ENCODE measurements at regions of chr7 and their contacts with region 1.

Region 1: GRCh38 chr7:76262683-76263402 is 39.6 kb upstream of the HSPB1 start:
- DNase-seq: peak; percentile 82
- ATAC-seq: peak; percentile 50
- H3K4me3 Mint-ChIP-seq: no peak overlapping the region
- H3K27ac Mint-ChIP-seq: peak overlapping the region; percentile 79; the same call in 1 of the 2 replicates
- H3K4me1 Mint-ChIP-seq: peaks cover 32% of the 10 kb centered on the region
- H3K27me3 Mint-ChIP-seq: no peaks in the 10 kb centered on the region; the same call in 1 of the 2 replicates
- CTCF ChIP-seq: peak; percentile 77

Region 2: DNA sequence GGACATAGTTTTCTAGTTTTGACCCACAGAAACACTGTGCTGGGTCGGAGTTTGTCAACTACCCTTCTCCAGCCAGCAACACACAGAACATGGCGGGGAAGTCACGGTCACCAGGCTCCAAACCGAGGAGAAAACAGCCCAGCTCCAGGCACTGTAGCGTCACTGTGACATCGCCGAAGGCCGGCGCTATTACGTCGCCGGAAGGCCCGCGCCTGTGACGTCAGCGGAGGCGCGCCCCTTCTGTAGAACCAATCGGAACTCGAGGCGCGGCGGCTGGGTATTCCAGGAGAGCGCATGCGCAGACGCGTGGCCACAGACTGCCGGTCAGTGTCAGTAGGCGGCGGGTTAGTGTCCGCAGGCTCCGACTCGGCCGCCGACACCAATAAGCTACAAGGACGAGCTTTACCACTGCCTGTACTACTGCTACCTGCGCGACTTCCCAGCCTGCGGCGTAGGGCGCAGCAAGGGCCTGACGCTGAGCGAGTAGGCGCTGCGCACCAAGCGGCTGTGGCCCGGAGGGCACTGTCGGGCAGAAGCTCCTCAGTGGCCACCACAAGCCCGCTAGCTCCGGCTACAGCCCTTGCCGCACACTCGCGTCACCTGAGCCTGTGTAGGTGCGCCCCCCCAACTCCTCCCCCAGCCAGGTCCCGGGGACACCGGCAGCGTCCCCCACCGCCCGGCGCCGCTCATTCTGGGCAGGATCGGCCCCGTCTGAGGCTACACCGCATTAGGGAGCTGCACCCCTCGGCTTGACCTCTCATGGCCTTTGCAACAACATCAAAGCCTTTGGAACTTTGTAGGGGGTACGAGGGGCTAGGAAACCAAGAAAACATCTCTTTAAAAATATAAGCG is 96.2 kb before region 1 on chr7:
- CTCF ChIA-PET with region 1: interaction called, 22 read pairs
- POLR2A ChIA-PET with region 1: interaction called, 14 read pairs
- DNase-seq: peak; percentile 98
- ATAC-seq: peak; percentile 70
- H3K4me3 Mint-ChIP-seq: peak overlapping the region; percentile 70
- H3K27ac Mint-ChIP-seq: peak overlapping the region; percentile 99
- H3K4me1 Mint-ChIP-seq: peaks cover 35% of the 10 kb centered on the region
- H3K27me3 Mint-ChIP-seq: no peaks in the 10 kb centered on the region
- CTCF ChIP-seq: no peak

Region 3: DNA sequence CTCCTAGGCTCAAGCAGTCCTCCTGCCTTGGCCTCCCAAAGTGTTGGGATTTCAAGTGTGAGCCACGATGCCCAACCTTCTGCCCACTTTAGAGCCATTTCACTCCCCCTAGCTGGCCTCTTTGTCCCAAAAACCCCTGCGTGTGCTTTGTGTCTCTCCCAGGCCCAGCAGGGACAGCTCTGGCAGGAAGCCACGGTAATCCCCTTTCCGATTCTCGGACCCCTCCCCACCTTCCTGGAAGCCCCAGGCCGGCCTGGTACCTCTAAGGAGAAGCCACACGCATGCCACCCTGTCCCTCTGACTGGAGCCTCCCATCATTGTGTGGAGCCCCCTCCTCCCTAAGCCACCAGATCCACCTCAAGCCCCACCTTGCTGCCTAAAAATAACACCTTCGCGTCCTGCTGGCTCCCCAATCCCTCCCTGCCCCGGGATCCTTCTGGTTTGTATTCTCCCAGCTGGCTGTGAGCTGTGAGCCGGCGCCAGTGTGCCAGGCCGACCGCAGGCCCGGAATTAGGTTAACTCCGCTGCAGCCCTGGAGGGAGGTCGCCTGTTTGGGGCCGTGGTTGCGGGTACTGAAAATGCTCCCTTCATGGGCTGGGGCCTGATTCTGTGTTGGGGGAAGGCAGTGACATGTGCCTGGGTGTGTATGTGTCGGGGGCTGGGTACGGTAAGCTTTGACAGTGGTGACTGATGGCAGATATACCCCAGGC is 77.5 kb before region 1 on chr7:
- CTCF ChIA-PET with region 1: interaction called, 19 read pairs
- POLR2A ChIA-PET with region 1: no interaction called
- DNase-seq: no peak
- ATAC-seq: peak; percentile 74
- H3K4me3 Mint-ChIP-seq: no peak overlapping the region
- H3K27ac Mint-ChIP-seq: peak overlapping the region; percentile 68
- H3K4me1 Mint-ChIP-seq: peaks cover 10% of the 10 kb centered on the region
- H3K27me3 Mint-ChIP-seq: no peaks in the 10 kb centered on the region; the same call in 1 of the 2 replicates
- CTCF ChIP-seq: no peak

Region 4: DNA sequence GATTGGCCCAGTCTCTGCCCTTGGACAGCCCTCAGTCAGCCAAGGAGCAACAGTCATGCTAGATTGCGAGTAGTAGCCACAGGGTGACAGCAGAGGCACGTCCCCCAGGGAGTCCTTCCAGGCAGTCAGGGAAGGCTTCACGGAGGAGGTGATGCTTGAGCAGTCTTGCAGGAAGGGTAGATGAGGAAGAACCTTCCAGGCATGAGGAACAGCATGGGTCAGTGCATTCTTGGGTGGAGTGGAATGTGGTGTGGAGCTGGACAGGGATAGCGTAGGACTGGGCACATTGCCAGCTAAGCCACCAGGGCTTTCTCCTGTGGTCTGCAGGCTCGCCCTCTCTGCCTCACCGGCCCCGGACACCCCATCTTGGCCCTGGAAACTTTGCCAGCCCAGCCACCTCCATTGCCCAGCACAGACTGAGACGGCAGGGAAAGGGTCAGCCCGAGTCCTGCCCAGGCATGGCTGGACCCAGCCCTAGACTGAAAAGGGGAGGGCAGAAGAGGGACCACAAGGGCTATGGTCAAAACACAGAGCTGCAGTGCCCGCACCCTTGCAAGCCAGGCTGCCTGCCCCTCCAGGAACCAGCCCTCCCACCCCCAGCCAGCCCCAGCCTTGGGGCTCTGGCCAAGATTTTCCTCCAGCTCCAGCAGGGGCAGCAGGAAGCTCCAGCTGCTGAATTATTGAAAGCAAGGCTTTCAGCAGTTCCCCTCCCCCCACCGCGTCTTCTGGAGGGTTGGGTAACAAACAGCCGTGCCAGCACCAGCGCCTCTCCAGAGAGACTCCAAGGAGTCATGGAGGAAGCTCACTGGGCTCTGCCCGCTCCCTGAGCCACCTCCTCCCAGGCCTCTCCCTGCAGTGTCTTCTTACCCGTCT is 42.4 kb before region 1 on chr7:
- CTCF ChIA-PET with region 1: interaction called, 61 read pairs
- POLR2A ChIA-PET with region 1: no interaction called
- DNase-seq: peak; percentile 84
- ATAC-seq: peak; percentile 56
- H3K4me3 Mint-ChIP-seq: no peak overlapping the region; the same call in 1 of the 2 replicates
- H3K27ac Mint-ChIP-seq: peak overlapping the region; percentile 84; the same call in 1 of the 2 replicates
- H3K4me1 Mint-ChIP-seq: peaks cover 76% of the 10 kb centered on the region
- H3K27me3 Mint-ChIP-seq: no peaks in the 10 kb centered on the region; the same call in 1 of the 2 replicates
- CTCF ChIP-seq: no peak

Region 5: GRCh38 chr7:76272851-76273497 is 10.1 kb after region 1 on chr7:
- CTCF ChIA-PET with region 1: interaction called, 34 read pairs
- POLR2A ChIA-PET with region 1: interaction called, 4 read pairs
- DNase-seq: no peak
- ATAC-seq: peak; percentile 38
- H3K4me3 Mint-ChIP-seq: peak overlapping the region; percentile 39
- H3K27ac Mint-ChIP-seq: no peak overlapping the region
- H3K4me1 Mint-ChIP-seq: peaks cover 36% of the 10 kb centered on the region
- H3K27me3 Mint-ChIP-seq: peaks cover 21% of the 10 kb centered on the region; the same call in 1 of the 2 replicates
- CTCF ChIP-seq: no peak

Region 6: DNA sequence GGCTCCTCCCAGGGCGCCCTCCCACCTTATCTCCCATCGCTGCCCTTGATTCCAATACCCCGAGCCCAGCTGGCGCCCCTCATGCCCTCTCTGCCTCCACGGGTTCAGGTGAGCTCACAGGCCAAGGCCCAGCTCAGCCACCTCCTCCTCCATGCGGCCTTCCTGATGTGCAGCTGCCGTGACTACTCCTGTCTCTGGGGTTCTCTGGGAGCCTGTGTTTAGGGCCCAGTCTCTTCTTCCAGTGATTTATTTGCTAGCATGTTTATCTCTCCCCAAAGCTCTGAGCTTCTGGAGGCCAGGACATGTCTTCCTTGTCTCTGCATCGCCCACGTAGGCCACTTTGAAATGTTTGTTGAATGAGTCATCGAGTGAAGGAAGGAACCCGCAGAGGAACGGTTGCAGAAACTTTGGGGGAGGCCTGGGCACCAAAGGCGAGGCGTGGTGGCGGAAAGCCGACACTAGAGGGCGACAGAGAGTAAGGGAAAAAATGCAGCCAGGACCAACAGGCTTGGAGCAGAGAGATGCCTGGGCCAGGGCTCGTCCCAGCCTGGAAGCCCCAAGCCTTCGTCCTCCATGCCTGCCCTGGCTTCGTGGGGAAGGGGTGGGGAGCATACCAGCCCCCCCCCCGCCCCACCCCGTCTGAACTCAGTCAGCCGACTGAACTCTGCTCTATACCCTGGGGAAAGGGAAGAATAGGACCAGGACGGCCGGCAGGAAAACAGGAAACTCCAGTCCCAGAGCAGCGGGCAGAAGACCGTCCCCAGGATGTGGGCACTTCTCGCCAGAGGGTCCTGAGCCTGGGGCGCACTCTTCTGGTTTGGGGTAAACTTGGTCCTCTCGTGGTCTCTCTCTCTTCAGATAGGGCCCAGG is 28.7 kb after region 1 on chr7:
- CTCF ChIA-PET with region 1: interaction called, 10 read pairs
- POLR2A ChIA-PET with region 1: interaction called, 8 read pairs
- DNase-seq: peak; percentile 93
- ATAC-seq: peak; percentile 79
- H3K4me3 Mint-ChIP-seq: no peak overlapping the region
- H3K27ac Mint-ChIP-seq: peak overlapping the region; percentile 96
- H3K4me1 Mint-ChIP-seq: peaks cover 39% of the 10 kb centered on the region
- H3K27me3 Mint-ChIP-seq: peaks cover 3% of the 10 kb centered on the region
- CTCF ChIP-seq: peak; percentile 97

Measured in WTC11 (cell line).